AG04449 (cell line): ENCODE measurements at regions of chr6 and their contacts with region 1.

Region 1: DNA sequence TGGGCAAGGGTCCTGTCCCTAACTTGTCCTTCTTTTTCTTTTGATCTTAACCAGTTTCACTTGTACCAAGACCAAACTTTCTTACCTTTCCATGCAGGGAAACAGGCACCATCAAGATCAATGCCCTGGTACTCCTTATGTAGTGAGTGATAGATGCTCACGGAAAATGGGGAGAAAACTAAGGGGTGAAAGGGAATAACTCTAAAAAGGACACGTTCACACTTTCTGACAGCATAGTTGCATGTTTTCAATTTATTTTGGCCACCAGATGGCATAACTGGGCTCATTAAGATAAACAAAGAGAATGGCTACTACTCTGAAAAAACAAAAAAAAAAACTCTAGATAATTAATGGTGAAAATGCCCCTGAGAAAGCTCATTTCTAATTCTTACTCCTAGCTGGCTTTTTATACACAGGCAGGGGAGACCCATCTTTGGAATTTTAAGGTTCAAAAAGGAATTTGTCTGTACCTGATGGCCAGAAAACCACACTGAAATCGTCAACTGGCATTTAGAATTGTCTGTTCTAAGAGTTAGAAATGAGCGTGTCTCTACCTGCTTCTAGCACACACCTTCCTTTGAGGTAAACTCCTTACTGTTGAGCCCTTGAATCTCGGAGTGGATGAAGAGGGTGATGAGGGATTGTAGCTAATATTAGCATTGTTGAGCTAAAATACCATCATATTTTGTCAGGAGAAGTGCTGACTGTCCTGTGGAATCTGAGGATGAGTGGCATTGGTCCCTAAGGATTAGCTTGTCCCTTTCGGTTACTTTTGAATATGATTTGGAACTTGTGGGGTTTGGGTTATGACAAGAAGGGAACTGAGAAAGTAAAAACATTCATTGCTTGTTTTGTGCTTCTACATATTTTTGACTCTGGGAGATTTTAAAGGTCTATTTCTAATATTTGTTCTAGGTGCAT is 62.2 kb upstream of the DDR1 start:
- DNase-seq: no peak
- H3K4me3 ChIP-seq: no peak overlapping the region
- CTCF ChIP-seq: peak; percentile 33

Region 2: GRCh38 chr6:30752157-30752927 is 69.8 kb before region 1 on chr6:
- CTCF ChIA-PET with region 1: interaction called, 27 read pairs
- POLR2A ChIA-PET with region 1: interaction called, 10 read pairs
- DNase-seq: peak; percentile 100
- H3K4me3 ChIP-seq: 0 out of 2 replicates have a peak overlapping the region, but pooled peaks have one; percentile 4
- CTCF ChIP-seq: no peak

Region 3: GRCh38 chr6:30759575-30760239 is 62.4 kb before region 1 on chr6:
- CTCF ChIA-PET with region 1: interaction called, 19 read pairs
- POLR2A ChIA-PET with region 1: interaction called, 4 read pairs
- DNase-seq: peak; percentile 98
- H3K4me3 ChIP-seq: no peak overlapping the region
- CTCF ChIP-seq: no peak

Region 4: DNA sequence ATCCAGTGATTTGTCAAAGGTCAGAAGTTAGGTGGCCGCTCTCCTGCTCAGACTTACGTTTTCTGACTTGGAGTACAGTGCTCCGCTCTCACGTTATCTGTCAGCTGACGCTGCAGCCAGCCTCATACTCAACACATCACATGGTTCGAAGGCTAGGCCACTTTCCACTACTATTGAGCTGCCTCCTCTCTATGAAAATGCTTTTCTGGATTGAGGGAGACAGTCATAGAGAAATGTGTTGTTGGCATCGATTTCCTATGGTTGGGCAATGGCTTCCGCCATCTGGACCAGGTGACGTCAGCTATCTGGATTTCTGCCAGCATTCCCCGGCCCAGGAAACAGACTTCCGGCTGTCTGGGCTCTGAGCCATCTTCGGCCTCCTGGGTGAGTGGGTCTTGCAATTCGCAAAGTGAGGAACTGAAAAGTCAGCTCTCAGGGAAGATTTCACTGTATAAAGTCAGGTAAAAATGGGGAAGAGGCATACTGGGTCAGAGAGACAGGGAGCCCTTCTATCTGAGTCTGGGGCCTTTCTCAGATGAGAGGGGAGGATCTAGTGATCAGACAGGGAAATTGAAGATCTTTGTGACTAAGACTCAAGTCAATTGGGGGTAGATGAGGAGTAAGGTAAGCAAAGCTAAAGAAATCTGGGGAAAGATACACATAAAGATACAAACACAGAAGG is 40.2 kb before region 1 on chr6:
- CTCF ChIA-PET with region 1: interaction called, 16 read pairs
- POLR2A ChIA-PET with region 1: interaction called, 6 read pairs
- DNase-seq: peak; percentile 97
- H3K4me3 ChIP-seq: no peak overlapping the region
- CTCF ChIP-seq: no peak

Region 5: DNA sequence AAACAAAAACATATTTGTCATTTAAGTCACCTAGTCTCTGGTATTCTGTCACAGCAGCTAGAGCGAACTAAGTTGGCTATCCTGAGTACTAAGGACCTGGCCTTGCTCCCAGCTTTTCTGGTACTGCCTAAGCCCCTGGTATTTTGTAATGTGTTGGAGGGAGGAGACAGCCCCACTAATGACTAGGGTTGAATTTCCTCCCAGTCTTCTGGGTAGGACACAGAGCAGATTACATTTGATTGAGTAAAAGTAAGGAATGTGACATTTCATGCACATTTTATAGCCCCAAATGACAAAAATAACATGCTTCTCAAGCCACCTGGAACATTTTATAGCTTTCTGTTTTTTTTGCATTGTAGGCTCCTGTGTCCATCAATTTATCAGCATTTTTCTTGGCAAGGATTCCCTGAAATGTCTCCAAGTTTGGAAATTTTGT is 14.3 kb after region 1 on chr6:
- CTCF ChIA-PET with region 1: interaction called, 24 read pairs
- POLR2A ChIA-PET with region 1: no interaction called
- DNase-seq: no peak
- H3K4me3 ChIP-seq: no peak overlapping the region
- CTCF ChIP-seq: no peak

Region 6: GRCh38 chr6:30883685-30884520 is 61.8 kb after region 1 on chr6 and contains the start of gene DDR1:
- CTCF ChIA-PET with region 1: interaction called, 472 read pairs
- POLR2A ChIA-PET with region 1: no interaction called
- DNase-seq: no peak
- H3K4me3 ChIP-seq: peak within 1 kb of the TSS; percentile 82
- CTCF ChIP-seq: no peak

Region 7: GRCh38 chr6:31252625-31253024 is 430.5 kb after region 1 on chr6:
- CTCF ChIA-PET with region 1: no interaction called
- POLR2A ChIA-PET with region 1: no interaction called
- DNase-seq: no peak
- H3K4me3 ChIP-seq: no peak overlapping the region
- CTCF ChIP-seq: no peak

Region 8: DNA sequence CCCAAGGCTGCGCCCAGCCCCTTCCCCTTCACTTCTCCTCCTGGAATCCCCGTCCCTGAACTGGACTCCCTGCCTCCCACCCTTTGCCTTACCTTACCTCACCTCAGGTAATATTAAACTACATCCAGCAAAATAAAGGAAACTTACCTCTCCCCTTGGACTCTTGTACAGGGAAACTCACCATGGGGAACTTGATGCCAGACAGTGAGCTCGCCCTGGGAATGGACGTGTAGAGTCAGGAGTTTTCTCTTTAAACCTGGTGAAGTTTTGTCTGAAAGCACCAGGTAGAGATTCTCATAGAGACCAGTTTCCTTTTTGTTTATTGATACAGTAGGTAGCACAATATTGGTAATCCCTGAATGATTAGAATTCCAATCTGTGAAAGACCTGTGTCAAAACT is 450.3 kb after region 1 on chr6:
- CTCF ChIA-PET with region 1: no interaction called
- POLR2A ChIA-PET with region 1: no interaction called
- DNase-seq: no peak
- H3K4me3 ChIP-seq: peak overlapping the region; percentile 72
- CTCF ChIP-seq: no peak